CD14-positive monocyte (primary cell): ENCODE measurements at regions of chr3 and their contacts with region 1.

Region 1: GRCh38 chr3:6799264-6799915 is 61.5 kb upstream of the GRM7 start:
- DNase-seq: peak; percentile 6 to 30 (median 23)
- H3K4me3 ChIP-seq: no peak overlapping the region
- H3K4me3 Mint-ChIP-seq: no peak overlapping the region
- H3K27ac ChIP-seq: no peak overlapping the region
- H3K27ac Mint-ChIP-seq: no peak overlapping the region
- H3K4me1 ChIP-seq: no peaks in the 10 kb centered on the region
- H3K4me1 Mint-ChIP-seq: no peaks in the 10 kb centered on the region
- H3K27me3 ChIP-seq: no peaks in the 10 kb centered on the region
- H3K27me3 Mint-ChIP-seq: peaks cover 0 to 2% (median 0%) of the 10 kb centered on the region in 3 donors
- CTCF ChIP-seq: peak; percentile 79

Region 2: DNA sequence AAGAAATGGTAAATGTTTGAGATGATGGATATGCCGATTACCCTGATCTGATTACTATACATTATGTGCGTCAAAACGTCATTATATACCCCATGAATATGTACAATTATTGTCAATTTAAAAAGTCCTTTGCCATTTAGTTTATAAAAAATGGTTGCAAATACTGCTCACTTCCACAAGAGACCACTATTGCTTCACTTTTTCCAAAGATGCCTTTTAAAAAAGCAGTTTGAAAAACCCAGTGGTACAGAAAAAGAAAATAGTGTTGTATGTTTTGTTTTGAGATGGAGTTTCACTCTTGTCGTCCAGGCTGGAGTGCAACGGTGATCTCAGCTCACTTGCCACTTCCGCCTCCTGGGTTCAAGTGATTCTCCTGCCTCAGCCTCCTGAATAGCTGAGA is 1572.6 kb before region 1 on chr3:
- intact Hi-C with region 1: loop called in 1 of 2 experiments (anchors 5 kb)
- DNase-seq: peak in 1 of 3 donors; percentile 20
- H3K4me3 ChIP-seq: no peak overlapping the region
- H3K4me3 Mint-ChIP-seq: no peak overlapping the region
- H3K27ac ChIP-seq: no peak overlapping the region
- H3K27ac Mint-ChIP-seq: no peak overlapping the region
- H3K4me1 ChIP-seq: no peaks in the 10 kb centered on the region
- H3K4me1 Mint-ChIP-seq: peaks cover 4% of the 10 kb centered on the region
- H3K27me3 ChIP-seq: no peaks in the 10 kb centered on the region
- H3K27me3 Mint-ChIP-seq: peaks cover 3 to 5% (median 3%) of the 10 kb centered on the region in 3 donors
- CTCF ChIP-seq: peak; percentile 43

Region 3: GRCh38 chr3:5304789-5305683 is 1494.4 kb before region 1 on chr3:
- intact Hi-C with region 1: loop called (anchors 5 to 10 kb)
- DNase-seq: peak; percentile 27 to 42 (median 42)
- H3K4me3 ChIP-seq: no peak overlapping the region
- H3K4me3 Mint-ChIP-seq: no peak overlapping the region
- H3K27ac ChIP-seq: no peak overlapping the region
- H3K27ac Mint-ChIP-seq: no peak overlapping the region
- H3K4me1 ChIP-seq: no peaks in the 10 kb centered on the region
- H3K4me1 Mint-ChIP-seq: peaks cover 4% of the 10 kb centered on the region
- H3K27me3 ChIP-seq: no peaks in the 10 kb centered on the region
- H3K27me3 Mint-ChIP-seq: peaks cover 1 to 3% (median 2%) of the 10 kb centered on the region in 3 donors
- CTCF ChIP-seq: peak; percentile 84

Region 4: DNA sequence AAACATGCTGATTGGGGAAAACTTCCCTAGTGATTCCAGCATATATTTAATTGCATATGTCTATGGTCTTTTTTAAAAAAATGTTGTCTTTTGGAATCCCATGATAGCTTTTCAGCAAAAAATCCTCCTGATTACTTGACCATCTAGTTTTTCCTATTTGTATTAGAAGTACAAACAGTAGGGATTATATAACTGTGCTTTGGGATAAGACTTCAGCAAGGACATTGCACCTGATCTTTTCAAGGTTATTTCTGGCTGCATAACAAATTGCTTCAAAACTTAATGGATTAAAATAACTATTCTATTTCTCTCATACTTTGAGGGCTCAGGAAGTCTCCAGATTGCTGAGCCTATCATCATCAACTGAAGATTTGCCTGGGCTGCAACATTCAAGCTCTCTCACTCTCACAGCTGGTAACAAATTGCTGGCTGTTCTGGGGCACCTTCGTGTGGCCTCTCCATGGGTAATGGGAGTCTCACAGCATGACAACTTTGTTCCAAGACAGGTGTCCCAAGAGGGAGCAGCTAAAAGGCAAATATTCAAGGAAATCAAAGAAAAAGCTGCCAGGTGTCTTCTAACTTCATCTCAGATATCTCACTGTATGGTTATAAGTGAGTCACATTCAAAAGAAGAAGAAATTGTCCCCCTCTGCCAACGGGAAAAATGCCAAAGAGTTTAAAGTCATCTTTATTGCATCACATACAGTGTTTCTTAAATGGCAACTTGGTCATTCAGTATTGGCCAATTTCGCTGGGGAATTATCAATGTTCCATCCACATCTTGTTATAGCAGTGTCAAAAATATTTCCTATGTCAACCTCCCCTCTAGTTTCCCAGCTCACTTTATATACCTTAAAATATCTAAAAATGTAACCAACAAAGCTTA is 583.0 kb before region 1 on chr3:
- intact Hi-C with region 1: loop called in 1 of 2 experiments (anchors 10 kb)
- DNase-seq: peak; percentile 29 to 74 (median 44)
- H3K4me3 ChIP-seq: no peak overlapping the region
- H3K4me3 Mint-ChIP-seq: no peak overlapping the region
- H3K27ac ChIP-seq: no peak overlapping the region
- H3K27ac Mint-ChIP-seq: peak overlapping the region in 6 of 7 donors; percentile 33 to 94 (median 76)
- H3K4me1 ChIP-seq: peaks cover 27 to 32% of the 10 kb centered on the region in 2 donors
- H3K4me1 Mint-ChIP-seq: peaks cover 34% of the 10 kb centered on the region
- H3K27me3 ChIP-seq: no peaks in the 10 kb centered on the region
- H3K27me3 Mint-ChIP-seq: peaks cover 0 to 2% (median 0%) of the 10 kb centered on the region in 3 donors
- CTCF ChIP-seq: no peak

Region 5: GRCh38 chr3:6878731-6879130 is 79.3 kb after region 1 on chr3:
- intact Hi-C with region 1: no loop called
- DNase-seq: no peak
- H3K4me3 ChIP-seq: no peak overlapping the region
- H3K4me3 Mint-ChIP-seq: no peak overlapping the region
- H3K27ac ChIP-seq: no peak overlapping the region
- H3K27ac Mint-ChIP-seq: no peak overlapping the region
- H3K4me1 ChIP-seq: no peaks in the 10 kb centered on the region
- H3K4me1 Mint-ChIP-seq: no peaks in the 10 kb centered on the region
- H3K27me3 ChIP-seq: no peaks in the 10 kb centered on the region
- H3K27me3 Mint-ChIP-seq: no peaks in the 10 kb centered on the region
- CTCF ChIP-seq: no peak